ENCODE measurements at regions of chr9 and their contacts with region 1.

Region 1: DNA sequence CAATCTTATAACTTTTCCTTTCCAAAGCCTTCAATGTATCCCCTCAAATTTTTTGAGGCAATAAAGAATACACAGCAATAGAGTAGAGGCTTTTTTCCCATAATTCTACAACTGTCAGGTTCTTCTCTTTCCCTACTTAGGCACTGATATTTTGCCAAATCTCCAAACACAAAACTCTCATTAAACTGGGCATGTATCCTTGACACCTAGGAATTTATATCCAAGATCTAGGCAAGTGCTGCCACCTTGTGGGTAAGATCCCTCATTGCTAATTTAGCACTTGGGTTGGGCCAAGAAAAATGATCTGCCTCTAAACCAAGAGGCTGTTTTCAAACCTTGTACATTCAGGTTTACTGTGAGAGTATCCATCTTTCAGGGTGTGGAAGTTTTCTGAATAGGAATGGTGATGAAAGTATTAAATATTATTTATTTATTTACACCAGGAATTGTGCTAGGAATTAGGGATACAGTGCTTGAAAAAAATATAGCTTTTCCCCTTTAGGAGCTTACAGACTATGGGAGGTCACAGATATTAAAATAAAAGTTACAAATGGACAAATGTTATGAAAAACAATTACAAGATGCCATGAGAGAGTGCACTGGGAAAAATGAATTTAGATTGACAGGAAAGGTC is 17.6 kb downstream of the TSTD2 start:
- DNase-seq: peak; percentile 68
- ATAC-seq: peak; percentile 49
- H3K4me3 ChIP-seq: no peak overlapping the region
- H3K4me3 Mint-ChIP-seq: no peak overlapping the region
- H3K27ac ChIP-seq: no peak overlapping the region
- H3K27ac Mint-ChIP-seq: no peak overlapping the region
- H3K4me1 ChIP-seq: no peaks in the 10 kb centered on the region
- H3K4me1 Mint-ChIP-seq: peaks cover 8% of the 10 kb centered on the region
- H3K27me3 ChIP-seq: no peaks in the 10 kb centered on the region
- H3K27me3 Mint-ChIP-seq: no peaks in the 10 kb centered on the region
- CTCF ChIP-seq: peak; percentile 95

Region 2: GRCh38 chr9:97386733-97387503 is 228.6 kb before region 1 on chr9:
- CTCF ChIA-PET with region 1: interaction called, 52 read pairs
- POLR2A ChIA-PET with region 1: no interaction called
- intact Hi-C with region 1: no loop called
- DNase-seq: peak; percentile 74
- ATAC-seq: peak; percentile 77
- H3K4me3 ChIP-seq: peak overlapping the region in 1 of 5 experiments; percentile 6
- H3K4me3 Mint-ChIP-seq: no peak overlapping the region
- H3K27ac ChIP-seq: no peak overlapping the region
- H3K27ac Mint-ChIP-seq: no peak overlapping the region
- H3K4me1 ChIP-seq: peaks cover 15% of the 10 kb centered on the region in 2 donors
- H3K4me1 Mint-ChIP-seq: peaks cover 18% of the 10 kb centered on the region
- H3K27me3 ChIP-seq: peaks cover 0 to 28% (median 0%) of the 10 kb centered on the region in 4 experiments
- H3K27me3 Mint-ChIP-seq: peaks cover 10% of the 10 kb centered on the region
- CTCF ChIP-seq: peak; percentile 99

Region 3: GRCh38 chr9:97468658-97469448 is 146.7 kb before region 1 on chr9:
- CTCF ChIA-PET with region 1: interaction called, 29 read pairs
- POLR2A ChIA-PET with region 1: no interaction called
- intact Hi-C with region 1: loop called (anchors 1 kb)
- DNase-seq: peak; percentile 30
- ATAC-seq: peak; percentile 47
- H3K4me3 ChIP-seq: no peak overlapping the region
- H3K4me3 Mint-ChIP-seq: no peak overlapping the region
- H3K27ac ChIP-seq: no peak overlapping the region
- H3K27ac Mint-ChIP-seq: no peak overlapping the region
- H3K4me1 ChIP-seq: no peaks in the 10 kb centered on the region
- H3K4me1 Mint-ChIP-seq: no peaks in the 10 kb centered on the region
- H3K27me3 ChIP-seq: no peaks in the 10 kb centered on the region
- H3K27me3 Mint-ChIP-seq: no peaks in the 10 kb centered on the region
- CTCF ChIP-seq: peak; percentile 30

Region 4: DNA sequence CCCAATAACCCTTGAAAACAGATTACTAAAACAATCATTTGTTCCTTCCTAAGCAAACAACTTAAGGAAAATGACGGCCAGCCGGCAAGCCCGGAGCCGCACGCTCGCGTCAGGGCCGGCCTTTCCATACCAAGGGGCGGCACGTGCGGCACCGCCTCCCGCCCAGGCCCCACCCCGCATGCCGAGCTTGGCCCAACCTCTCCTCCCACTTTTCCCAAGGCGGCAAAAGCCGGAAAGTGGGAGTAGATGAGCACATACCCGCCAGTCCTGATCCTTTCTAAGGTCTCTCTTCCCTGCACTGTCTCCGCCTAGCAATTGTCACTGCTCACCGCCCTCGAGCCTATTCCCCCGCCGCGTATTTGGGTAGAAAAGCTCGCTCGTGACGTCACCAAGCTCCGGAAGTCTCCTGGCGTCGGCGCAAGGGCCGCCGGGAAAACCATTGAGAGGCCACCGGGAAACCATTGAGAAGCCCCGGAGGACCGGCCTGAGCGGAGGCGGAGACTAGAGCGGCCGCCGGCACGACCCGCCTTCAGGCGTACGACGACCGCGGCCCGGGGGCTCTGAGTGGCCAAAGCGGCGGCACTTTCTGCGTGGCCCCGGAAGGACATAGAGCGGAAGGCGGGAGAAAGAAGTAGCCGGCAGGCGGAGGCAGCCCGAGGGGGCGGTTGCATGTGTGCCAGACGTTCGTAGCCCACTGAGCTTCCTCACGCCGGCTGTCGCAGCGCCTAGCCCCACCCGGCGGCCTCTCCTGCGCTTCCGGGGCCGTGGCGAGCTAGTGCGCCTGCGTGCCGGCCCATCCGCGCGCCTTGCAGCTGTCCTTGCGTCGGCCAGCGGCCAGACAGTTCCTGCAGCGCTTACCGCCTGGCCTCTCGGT is 17.7 kb after region 1 on chr9 and contains the starts of genes NCBP1 and TSTD2:
- CTCF ChIA-PET with region 1: interaction called, 30 read pairs
- POLR2A ChIA-PET with region 1: interaction called, 3 read pairs
- intact Hi-C with region 1: no loop called
- DNase-seq: peak; percentile 99
- ATAC-seq: peak; percentile 91
- H3K4me3 ChIP-seq: peak within 1 kb of the TSS; percentile 94 to 99 (median 95)
- H3K4me3 Mint-ChIP-seq: peak within 1 kb of the TSS; percentile 97
- H3K27ac ChIP-seq: peak within 1 kb of the TSS; percentile 92 to 93
- H3K27ac Mint-ChIP-seq: peak within 1 kb of the TSS; percentile 98
- H3K4me1 ChIP-seq: peaks cover 26 to 35% of the 10 kb centered on the region in 2 donors
- H3K4me1 Mint-ChIP-seq: peaks cover 58% of the 10 kb centered on the region
- H3K27me3 ChIP-seq: no peaks in the 10 kb centered on the region
- H3K27me3 Mint-ChIP-seq: no peaks in the 10 kb centered on the region
- CTCF ChIP-seq: no peak
- total RNA-seq, gene NCBP1: 38.0 and 40.7 TPM in 2 replicates
- total RNA-seq, gene TSTD2: 29.2 and 31.1 TPM in 2 replicates

Region 5: DNA sequence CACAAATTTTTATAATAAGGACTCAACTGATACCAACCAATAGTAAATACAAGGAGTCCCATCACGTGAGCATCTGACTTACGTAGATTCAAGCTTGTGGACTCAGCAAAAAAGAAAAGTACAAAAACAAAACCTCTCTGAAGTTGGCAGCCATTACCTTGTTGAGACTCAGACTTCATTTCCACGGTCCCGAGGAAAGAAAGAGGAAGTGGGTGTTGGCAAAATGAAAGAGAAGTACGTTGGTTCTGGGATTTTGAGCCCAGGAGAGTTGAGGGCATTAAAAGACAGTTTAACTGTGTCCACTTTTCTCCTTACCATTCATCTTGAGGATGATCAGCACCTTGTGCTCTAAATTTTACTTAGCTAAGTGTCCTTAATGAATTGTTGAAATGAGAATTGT is 44.8 kb after region 1 on chr9:
- CTCF ChIA-PET with region 1: no interaction called
- POLR2A ChIA-PET with region 1: no interaction called
- intact Hi-C with region 1: no loop called
- DNase-seq: peak; percentile 26
- ATAC-seq: no peak
- H3K4me3 ChIP-seq: no peak overlapping the region
- H3K4me3 Mint-ChIP-seq: no peak overlapping the region
- H3K27ac ChIP-seq: peak overlapping the region in 1 of 2 donors; percentile 35
- H3K27ac Mint-ChIP-seq: no peak overlapping the region
- H3K4me1 ChIP-seq: no peaks in the 10 kb centered on the region
- H3K4me1 Mint-ChIP-seq: peaks cover 11% of the 10 kb centered on the region
- H3K27me3 ChIP-seq: no peaks in the 10 kb centered on the region
- H3K27me3 Mint-ChIP-seq: no peaks in the 10 kb centered on the region
- CTCF ChIP-seq: no peak

Measured in B cell (primary cell).